ENCODE measurements at regions of chr11 and their contacts with region 1.

Region 1: DNA sequence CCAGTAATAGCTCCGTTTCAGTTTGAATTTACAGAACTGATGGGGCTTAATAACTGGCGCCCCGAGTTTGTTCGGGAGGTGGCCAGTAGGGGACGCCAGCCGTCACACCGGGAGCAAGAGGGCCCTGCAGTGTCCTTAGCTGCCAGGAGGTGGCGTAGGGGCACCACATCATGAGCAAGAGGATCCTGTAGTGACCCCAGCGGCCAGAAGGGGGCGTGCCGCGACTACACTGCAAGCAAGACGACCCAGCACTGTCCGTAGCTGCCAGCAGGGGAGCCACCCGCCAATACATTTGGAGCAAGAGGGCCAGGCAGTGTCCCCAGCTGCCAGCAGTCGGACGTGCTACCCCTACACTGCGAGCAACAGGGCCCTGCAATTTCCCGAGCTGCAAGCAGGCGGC is 663.7 kb upstream of the B3GAT1 start:
- H3K4me3 ChIP-seq: no peak overlapping the region
- H3K27ac ChIP-seq: no peak overlapping the region
- H3K4me1 ChIP-seq: no peaks in the 10 kb centered on the region
- CTCF ChIP-seq: peak; percentile 52

Region 2: DNA sequence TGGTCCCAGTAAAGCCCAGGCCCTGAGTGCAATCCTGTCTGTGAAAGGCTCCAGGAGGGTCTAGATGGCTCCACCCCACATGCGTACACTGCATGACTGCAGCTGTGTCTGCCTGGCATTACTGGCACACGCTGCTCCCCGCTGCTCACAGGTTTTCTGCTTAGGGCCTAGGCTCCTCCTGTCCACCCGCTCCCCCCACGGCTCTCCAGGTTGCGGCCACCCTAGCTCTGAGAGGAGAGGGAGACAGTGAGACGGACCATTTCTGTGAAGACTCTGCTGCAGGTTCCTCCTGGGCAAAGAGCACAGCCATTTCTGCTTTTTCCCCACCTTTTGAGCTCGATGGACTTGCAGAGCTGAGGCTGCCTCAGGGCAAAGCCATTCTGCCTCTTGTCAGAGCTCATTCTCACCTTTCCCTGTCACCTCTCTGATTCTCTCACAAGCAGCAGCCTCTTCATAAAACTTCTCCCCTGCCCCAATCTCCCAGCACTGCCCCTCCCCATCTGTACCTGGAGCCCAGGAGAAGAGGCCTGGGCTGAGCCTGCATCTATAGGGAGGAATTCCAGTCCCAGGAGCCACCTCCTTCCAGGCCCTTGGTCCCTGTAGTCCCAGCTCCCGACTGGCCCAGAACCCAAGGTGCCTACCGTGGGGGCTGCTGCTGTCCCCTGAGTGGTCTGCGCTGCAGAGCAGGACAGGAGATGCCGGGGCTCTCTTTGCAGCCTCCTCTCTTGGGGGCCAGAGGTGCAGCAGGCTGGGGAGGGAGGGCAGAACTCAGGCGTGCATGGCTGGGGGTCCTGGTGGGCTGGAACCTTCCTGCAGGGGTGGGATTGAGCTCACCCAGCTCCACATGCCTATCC is 230.0 kb before region 1 on chr11:
- CTCF ChIA-PET with region 1: no interaction called
- POLR2A ChIA-PET with region 1: no interaction called
- H3K4me3 ChIP-seq: no peak overlapping the region
- H3K27ac ChIP-seq: no peak overlapping the region
- H3K4me1 ChIP-seq: no peaks in the 10 kb centered on the region
- CTCF ChIP-seq: no peak

Region 3: GRCh38 chr11:134866981-134867675 is 208.6 kb before region 1 on chr11:
- CTCF ChIA-PET with region 1: interaction called, 18 read pairs
- POLR2A ChIA-PET with region 1: no interaction called
- H3K4me3 ChIP-seq: no peak overlapping the region
- H3K27ac ChIP-seq: no peak overlapping the region
- H3K4me1 ChIP-seq: no peaks in the 10 kb centered on the region
- CTCF ChIP-seq: no peak

Region 4: GRCh38 chr11:134932761-134933160 is 143.0 kb before region 1 on chr11:
- CTCF ChIA-PET with region 1: no interaction called
- POLR2A ChIA-PET with region 1: no interaction called
- H3K4me3 ChIP-seq: no peak overlapping the region
- H3K27ac ChIP-seq: no peak overlapping the region
- H3K4me1 ChIP-seq: no peaks in the 10 kb centered on the region
- CTCF ChIP-seq: no peak

Region 5: GRCh38 chr11:134984421-134984820 is 91.3 kb before region 1 on chr11:
- CTCF ChIA-PET with region 1: no interaction called
- POLR2A ChIA-PET with region 1: no interaction called
- H3K4me3 ChIP-seq: no peak overlapping the region
- H3K27ac ChIP-seq: no peak overlapping the region
- H3K4me1 ChIP-seq: no peaks in the 10 kb centered on the region
- CTCF ChIP-seq: no peak

Region 6: DNA sequence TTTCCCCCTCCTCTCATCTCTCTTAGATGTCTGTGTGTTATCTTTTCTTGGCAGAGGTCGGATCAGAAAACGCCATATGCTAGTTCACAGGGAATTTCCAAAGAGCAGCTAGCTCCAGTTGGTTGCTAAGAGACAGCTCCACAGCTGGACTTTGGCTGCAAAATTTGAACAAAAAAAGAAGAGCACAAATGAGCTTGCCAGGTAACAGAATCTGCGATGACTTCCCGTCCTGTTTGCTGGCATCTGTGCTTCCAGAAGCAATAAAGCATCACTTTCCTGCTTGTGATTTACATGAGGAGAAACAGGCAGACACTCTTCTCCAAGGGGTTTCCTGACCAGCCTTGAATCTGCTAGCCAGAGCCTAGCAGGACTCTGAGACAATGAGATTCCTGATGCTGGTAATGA is 67.7 kb before region 1 on chr11:
- CTCF ChIA-PET with region 1: no interaction called
- POLR2A ChIA-PET with region 1: no interaction called
- H3K4me3 ChIP-seq: no peak overlapping the region
- H3K27ac ChIP-seq: no peak overlapping the region
- H3K4me1 ChIP-seq: no peaks in the 10 kb centered on the region
- CTCF ChIP-seq: no peak

Region 7: DNA sequence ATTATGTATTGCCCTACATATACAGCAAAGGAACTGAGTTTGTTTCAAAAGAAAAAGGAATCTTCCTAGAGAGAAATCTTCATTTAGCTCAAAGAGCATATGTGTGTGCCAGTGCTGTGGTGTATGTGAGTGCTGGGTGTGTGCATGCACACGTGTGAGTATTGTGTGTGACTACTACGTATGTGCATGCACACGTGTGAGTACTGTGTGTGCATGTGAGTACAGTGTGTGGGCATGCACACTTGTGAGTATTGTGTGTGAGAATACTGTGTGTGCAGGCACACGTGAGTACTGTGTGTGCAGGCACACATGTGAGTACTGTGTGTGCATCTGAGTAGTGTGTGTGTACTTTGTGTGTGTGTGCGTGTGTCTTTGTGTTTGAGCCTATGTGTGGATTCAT is 12.7 kb before region 1 on chr11:
- CTCF ChIA-PET with region 1: interaction called, 12 read pairs
- POLR2A ChIA-PET with region 1: no interaction called
- H3K4me3 ChIP-seq: no peak overlapping the region
- H3K27ac ChIP-seq: no peak overlapping the region
- H3K4me1 ChIP-seq: no peaks in the 10 kb centered on the region
- CTCF ChIP-seq: no peak